HAP-1 (cell line): ENCODE measurements at regions of chr9 and their contacts with region 1.

Region 1: GRCh38 chr9:131358556-131358955 is 35.3 kb upstream of the PRRC2B start:
- DNase-seq: no peak
- H3K4me3 ChIP-seq: no peak overlapping the region
- H3K4me1 ChIP-seq: peaks cover 39% of the 10 kb centered on the region
- H3K27me3 ChIP-seq: no peaks in the 10 kb centered on the region

Region 2: DNA sequence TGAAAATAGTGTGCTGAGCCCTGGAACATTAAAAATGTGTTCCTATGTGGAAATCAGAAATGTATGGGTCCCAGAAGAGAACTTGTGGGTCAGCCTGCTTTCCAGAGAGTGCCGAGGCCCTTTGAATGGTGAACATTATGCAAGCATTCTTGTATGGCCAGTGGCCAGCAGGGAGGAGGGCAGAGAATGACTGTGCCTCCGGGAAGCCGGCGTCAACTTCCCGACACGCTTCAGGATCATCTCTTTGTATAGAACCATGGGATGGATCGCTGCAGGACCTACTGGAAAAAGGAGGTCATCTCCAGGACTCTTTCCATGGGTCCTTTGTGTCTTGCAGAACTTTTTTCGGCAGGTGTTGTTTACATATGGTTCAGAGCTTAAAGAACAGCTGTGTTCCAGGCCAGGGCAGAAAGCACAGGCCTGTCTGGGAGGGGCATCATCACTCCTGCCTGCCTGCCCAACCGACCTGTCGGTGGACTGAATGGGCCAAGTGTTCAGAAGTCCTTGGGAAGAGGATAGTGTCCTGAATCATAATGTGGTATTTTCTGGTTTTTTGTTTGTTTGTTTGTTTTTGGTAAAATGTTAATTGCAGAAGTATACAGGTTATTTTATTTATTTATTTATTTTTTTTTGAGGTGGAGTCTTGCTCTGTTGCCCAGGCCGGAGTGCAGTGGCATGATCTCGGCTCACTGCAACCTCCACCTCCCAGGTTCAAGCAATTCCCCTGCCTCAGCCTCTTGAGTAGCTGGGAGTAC is 44.4 kb after region 1 on chr9:
- in situ Hi-C with region 1: loop called (anchors 5 kb)
- DNase-seq: peak in 1 of 2 experiments; percentile 65
- H3K4me3 ChIP-seq: no peak overlapping the region
- H3K4me1 ChIP-seq: peaks cover 76% of the 10 kb centered on the region
- H3K27me3 ChIP-seq: no peaks in the 10 kb centered on the region